Activated CD8-positive, alpha-beta T cell treated with anti-CD3 and anti-CD28 coated beads for 36 hours (primary cell): ENCODE measurements at regions of chr17 and their contacts with region 1.

Region 1: GRCh38 chr17:43360739-43361505 is 37.9 kb upstream of the ARL4D start:
- DNase-seq: peak; percentile 97
- ATAC-seq: peak; percentile 86
- H3K4me3 Mint-ChIP-seq: peak overlapping the region; percentile 83
- H3K27ac Mint-ChIP-seq: peak overlapping the region; percentile 99
- H3K4me1 Mint-ChIP-seq: peaks cover 43% of the 10 kb centered on the region
- H3K27me3 Mint-ChIP-seq: peaks cover 4% of the 10 kb centered on the region
- CTCF ChIP-seq: no peak

Region 2: GRCh38 chr17:43338886-43339516 is 21.9 kb before region 1 on chr17:
- CTCF ChIA-PET with region 1: interaction called, 15 read pairs
- POLR2A ChIA-PET with region 1: interaction called, 199 read pairs
- intact Hi-C with region 1: no loop called
- DNase-seq: peak; percentile 83
- ATAC-seq: no peak
- H3K4me3 Mint-ChIP-seq: no peak overlapping the region
- H3K27ac Mint-ChIP-seq: no peak overlapping the region
- H3K4me1 Mint-ChIP-seq: peaks cover 41% of the 10 kb centered on the region
- H3K27me3 Mint-ChIP-seq: no peaks in the 10 kb centered on the region
- CTCF ChIP-seq: peak; percentile 88

Region 3: DNA sequence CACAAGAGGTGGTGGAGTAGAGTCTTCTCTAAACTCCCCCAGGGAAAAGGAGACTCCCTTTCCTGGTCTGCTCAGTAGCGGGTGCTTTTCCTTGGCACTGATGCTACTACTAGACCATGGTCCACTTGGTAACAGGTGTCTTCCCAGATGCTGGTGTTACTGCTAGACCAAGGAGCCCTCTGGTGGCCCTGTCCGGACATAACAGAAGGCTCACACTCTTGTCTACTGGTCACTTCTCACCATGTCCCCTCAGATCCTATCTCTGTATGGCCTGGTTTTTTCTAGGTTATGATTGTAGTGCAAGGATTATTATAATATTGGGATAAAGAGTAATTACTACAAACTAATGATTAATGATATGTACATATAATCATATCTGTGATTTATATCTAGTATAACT is 11.8 kb before region 1 on chr17:
- CTCF ChIA-PET with region 1: no interaction called
- POLR2A ChIA-PET with region 1: interaction called, 199 read pairs
- intact Hi-C with region 1: no loop called
- DNase-seq: no peak
- ATAC-seq: no peak
- H3K4me3 Mint-ChIP-seq: no peak overlapping the region
- H3K27ac Mint-ChIP-seq: no peak overlapping the region
- H3K4me1 Mint-ChIP-seq: peaks cover 9% of the 10 kb centered on the region
- H3K27me3 Mint-ChIP-seq: peaks cover 4% of the 10 kb centered on the region
- CTCF ChIP-seq: no peak

Region 4: GRCh38 chr17:43381204-43381603 is 20.3 kb after region 1 on chr17:
- CTCF ChIA-PET with region 1: no interaction called
- POLR2A ChIA-PET with region 1: interaction called, 138 read pairs
- intact Hi-C with region 1: no loop called
- DNase-seq: no peak
- ATAC-seq: no peak
- H3K4me3 Mint-ChIP-seq: no peak overlapping the region
- H3K27ac Mint-ChIP-seq: no peak overlapping the region
- H3K4me1 Mint-ChIP-seq: no peaks in the 10 kb centered on the region
- H3K27me3 Mint-ChIP-seq: no peaks in the 10 kb centered on the region
- CTCF ChIP-seq: no peak

Region 5: GRCh38 chr17:43388359-43389045 is 27.6 kb after region 1 on chr17:
- CTCF ChIA-PET with region 1: interaction called, 5 read pairs
- POLR2A ChIA-PET with region 1: interaction called, 138 read pairs
- intact Hi-C with region 1: no loop called
- DNase-seq: peak; percentile 94
- ATAC-seq: peak; percentile 76
- H3K4me3 Mint-ChIP-seq: peak overlapping the region; percentile 82
- H3K27ac Mint-ChIP-seq: peak overlapping the region; percentile 99
- H3K4me1 Mint-ChIP-seq: peaks cover 5% of the 10 kb centered on the region
- H3K27me3 Mint-ChIP-seq: no peaks in the 10 kb centered on the region
- CTCF ChIP-seq: no peak